SK-N-SH (cell line): ENCODE measurements at regions of chr3 and their contacts with region 1.

Region 1: GRCh38 chr3:107927361-107928083 is 163.3 kb downstream of the CD47 start:
- DNase-seq: peak; percentile 91
- H3K4me3 ChIP-seq: peak overlapping the region; percentile 64 to 72
- H3K27ac ChIP-seq: no peak overlapping the region; a peak in 1 of 4 replicates
- H3K4me1 ChIP-seq: peaks cover 0 to 3% of the 10 kb centered on the region in 2 experiments; a peak in 1 of 4 replicates
- H3K27me3 ChIP-seq: no peaks in the 10 kb centered on the region
- CTCF ChIP-seq: peak; percentile 98
- EP300 ChIP-seq: peak in 1 of 2 experiments; percentile 8; a peak in 1 of 4 replicates
- RAD21 ChIP-seq: peak; percentile 72

Region 2: GRCh38 chr3:107660306-107660976 is 267.1 kb before region 1 on chr3:
- CTCF ChIA-PET with region 1: interaction called, 21 read pairs
- POLR2A ChIA-PET with region 1: interaction called, 3 read pairs
- DNase-seq: peak; percentile 12
- H3K4me3 ChIP-seq: no peak overlapping the region
- H3K27ac ChIP-seq: 0 out of 4 replicates have a peak overlapping the region, but pooled peaks of 1 of the 2 experiments have one; percentile 0
- H3K4me1 ChIP-seq: peaks cover 7 to 21% of the 10 kb centered on the region in 2 experiments; a peak in 3 of 4 replicates
- H3K27me3 ChIP-seq: no peaks in the 10 kb centered on the region
- CTCF ChIP-seq: peak; percentile 87
- EP300 ChIP-seq: no peak
- RAD21 ChIP-seq: peak; percentile 72

Region 3: DNA sequence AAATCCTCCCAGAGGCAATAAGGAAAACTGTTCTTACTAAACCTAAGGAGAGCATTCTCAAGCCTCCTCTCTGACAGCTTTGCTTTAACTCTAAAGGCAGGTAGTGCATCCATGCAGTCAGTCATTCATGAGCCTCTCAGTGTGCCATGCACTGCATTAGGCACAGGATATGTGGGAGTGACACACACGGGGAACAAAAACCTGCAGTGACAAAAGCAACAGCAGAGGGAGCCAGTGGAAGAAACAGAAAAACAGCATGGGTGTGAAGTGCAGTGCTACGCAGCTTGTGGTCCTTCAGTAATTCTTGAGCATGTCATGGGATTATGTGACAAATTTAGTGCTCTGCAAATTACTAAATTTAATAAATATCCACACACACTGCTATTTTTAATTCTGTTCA is 174.0 kb before region 1 on chr3:
- CTCF ChIA-PET with region 1: interaction called, 23 read pairs
- POLR2A ChIA-PET with region 1: no interaction called
- DNase-seq: peak; percentile 24
- H3K4me3 ChIP-seq: no peak overlapping the region
- H3K27ac ChIP-seq: peak overlapping the region in 1 of 2 experiments; percentile 76; a peak in 2 of 4 replicates
- H3K4me1 ChIP-seq: peaks cover 0 to 26% of the 10 kb centered on the region in 2 experiments; a peak in 2 of 4 replicates
- H3K27me3 ChIP-seq: no peaks in the 10 kb centered on the region
- CTCF ChIP-seq: peak; percentile 65
- EP300 ChIP-seq: no peak
- RAD21 ChIP-seq: peak; percentile 66

Region 4: GRCh38 chr3:107916166-107916565 is 11.4 kb before region 1 on chr3:
- CTCF ChIA-PET with region 1: interaction called, 10 read pairs
- POLR2A ChIA-PET with region 1: no interaction called
- DNase-seq: no peak
- H3K4me3 ChIP-seq: no peak overlapping the region
- H3K27ac ChIP-seq: no peak overlapping the region
- H3K4me1 ChIP-seq: no peaks in the 10 kb centered on the region; a peak in 1 of 4 replicates
- H3K27me3 ChIP-seq: no peaks in the 10 kb centered on the region
- CTCF ChIP-seq: no peak
- EP300 ChIP-seq: no peak
- RAD21 ChIP-seq: no peak

Region 5: DNA sequence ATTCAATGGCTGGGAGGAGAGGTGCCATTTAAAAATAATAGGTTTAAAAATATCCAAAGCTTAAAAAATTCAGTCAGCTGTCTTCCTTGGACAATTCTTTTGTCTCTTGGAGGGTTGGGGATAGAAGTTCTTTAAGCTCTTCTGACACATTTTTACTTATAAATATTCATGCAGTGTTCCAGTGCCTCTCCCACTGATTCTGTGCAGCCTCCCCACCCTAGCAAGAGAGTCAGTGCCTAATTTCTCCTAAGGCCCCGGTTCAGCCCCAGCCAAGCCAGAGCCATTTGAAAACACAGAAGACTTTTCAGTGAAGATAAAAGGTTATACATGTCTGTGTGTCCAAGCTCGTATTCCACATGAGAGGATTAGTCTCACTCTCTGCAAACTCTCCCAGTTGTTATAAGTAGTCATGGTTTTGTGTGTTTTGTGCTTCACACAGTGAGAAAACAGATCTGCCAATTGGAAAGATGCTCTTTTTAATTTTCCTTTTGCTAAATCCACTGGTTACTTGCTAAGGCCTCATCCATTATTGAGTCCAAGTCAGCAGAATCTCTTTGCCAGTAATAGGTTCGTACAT is 22.0 kb after region 1 on chr3:
- CTCF ChIA-PET with region 1: interaction called, 10 read pairs
- POLR2A ChIA-PET with region 1: no interaction called
- DNase-seq: no peak
- H3K4me3 ChIP-seq: no peak overlapping the region
- H3K27ac ChIP-seq: no peak overlapping the region
- H3K4me1 ChIP-seq: peaks cover 0 to 3% of the 10 kb centered on the region in 2 experiments; a peak in 1 of 4 replicates
- H3K27me3 ChIP-seq: no peaks in the 10 kb centered on the region
- CTCF ChIP-seq: no peak
- EP300 ChIP-seq: no peak
- RAD21 ChIP-seq: no peak

Region 6: GRCh38 chr3:107999215-107999775 is 71.8 kb after region 1 on chr3:
- CTCF ChIA-PET with region 1: no interaction called
- POLR2A ChIA-PET with region 1: no interaction called
- DNase-seq: no peak
- H3K4me3 ChIP-seq: peak overlapping the region in 1 of 2 experiments; percentile 17; a peak in 1 of 4 replicates
- H3K27ac ChIP-seq: no peak overlapping the region
- H3K4me1 ChIP-seq: peaks cover 0 to 4% of the 10 kb centered on the region in 2 experiments; a peak in 1 of 4 replicates
- H3K27me3 ChIP-seq: no peaks in the 10 kb centered on the region
- CTCF ChIP-seq: no peak; the same call in 1 of the 2 replicates
- EP300 ChIP-seq: 0 out of 4 replicates have a peak, but pooled peaks of 1 of the 2 experiments have one; percentile 13
- RAD21 ChIP-seq: no peak